Dendritic cell treated with granulocyte-macrophage colony-stimulating factor and Interleukin-4, amounts not matched to agents 40 ng/mL and 50 ng/mL, for 4 days (primary cell): ENCODE measurements at regions of chr11 and their contacts with region 1.

Region 1: GRCh38 chr11:105870516-105871113 is 151.4 kb downstream of the MSANTD4 start:
- H3K4me3 Mint-ChIP-seq: no peak overlapping the region
- H3K27ac Mint-ChIP-seq: no peak overlapping the region
- H3K4me1 Mint-ChIP-seq: no peaks in the 10 kb centered on the region
- H3K27me3 Mint-ChIP-seq: peaks cover 2% of the 10 kb centered on the region

Region 2: GRCh38 chr11:105827906-105828305 is 42.7 kb before region 1 on chr11:
- intact Hi-C with region 1: loop called (anchors 2 kb)
- H3K4me3 Mint-ChIP-seq: no peak overlapping the region
- H3K27ac Mint-ChIP-seq: no peak overlapping the region
- H3K4me1 Mint-ChIP-seq: peaks cover 13% of the 10 kb centered on the region
- H3K27me3 Mint-ChIP-seq: no peaks in the 10 kb centered on the region

Region 3: GRCh38 chr11:106568632-106569031 is 698.0 kb after region 1 on chr11:
- intact Hi-C with region 1: no loop called
- H3K4me3 Mint-ChIP-seq: no peak overlapping the region
- H3K27ac Mint-ChIP-seq: no peak overlapping the region
- H3K4me1 Mint-ChIP-seq: no peaks in the 10 kb centered on the region
- H3K27me3 Mint-ChIP-seq: no peaks in the 10 kb centered on the region